ENCODE measurements at regions of chr2 and their contacts with region 1.

Region 1: DNA sequence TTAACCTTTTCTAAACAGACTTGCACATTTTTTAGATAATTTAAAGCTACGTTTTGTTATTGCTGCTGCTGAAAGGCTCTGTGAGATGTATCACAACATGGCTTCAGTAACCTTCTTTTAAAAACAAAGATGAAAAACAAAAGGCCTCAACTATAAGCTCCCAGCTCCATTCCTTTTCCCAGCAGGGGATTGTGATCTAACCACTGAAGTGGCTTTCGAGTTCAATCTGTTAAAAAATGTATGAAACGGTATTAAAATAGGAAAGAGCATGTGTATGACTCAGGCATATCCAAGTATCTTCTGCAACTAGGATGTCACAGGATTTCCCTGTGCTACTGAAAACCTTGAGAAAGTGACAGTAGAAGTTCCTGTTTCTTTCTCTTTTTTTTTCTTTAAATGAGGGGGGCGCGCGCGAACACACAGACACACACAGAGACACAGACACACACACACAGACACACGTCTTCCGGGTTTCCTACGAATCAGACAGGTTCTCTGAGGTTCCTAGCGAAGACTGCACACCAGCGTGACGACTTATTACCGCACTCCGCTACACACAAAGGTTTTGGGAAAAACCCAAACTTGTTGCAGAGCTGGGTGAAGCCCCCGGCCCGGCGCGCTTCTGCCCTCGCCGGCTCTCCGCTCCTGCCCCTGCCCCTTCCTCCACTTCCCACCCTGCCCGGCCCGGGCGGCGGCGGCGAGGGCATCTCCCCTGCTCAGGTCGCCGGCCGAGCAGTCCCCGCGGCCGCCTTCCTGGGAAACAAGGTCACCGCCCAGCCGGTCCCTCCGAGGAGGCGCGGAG is 86.8 kb downstream of the RBMS1 start:
- DNase-seq: peak in 1 of 2 donors; percentile 80
- H3K4me3 ChIP-seq: peak overlapping the region; percentile 92 to 99
- H3K27ac ChIP-seq: peak overlapping the region; percentile 97
- H3K4me1 ChIP-seq: peaks cover 10 to 44% of the 10 kb centered on the region in 2 donors
- H3K27me3 ChIP-seq: no peaks in the 10 kb centered on the region
- CTCF ChIP-seq: peak in 1 of 3 experiments; percentile 3

Region 2: DNA sequence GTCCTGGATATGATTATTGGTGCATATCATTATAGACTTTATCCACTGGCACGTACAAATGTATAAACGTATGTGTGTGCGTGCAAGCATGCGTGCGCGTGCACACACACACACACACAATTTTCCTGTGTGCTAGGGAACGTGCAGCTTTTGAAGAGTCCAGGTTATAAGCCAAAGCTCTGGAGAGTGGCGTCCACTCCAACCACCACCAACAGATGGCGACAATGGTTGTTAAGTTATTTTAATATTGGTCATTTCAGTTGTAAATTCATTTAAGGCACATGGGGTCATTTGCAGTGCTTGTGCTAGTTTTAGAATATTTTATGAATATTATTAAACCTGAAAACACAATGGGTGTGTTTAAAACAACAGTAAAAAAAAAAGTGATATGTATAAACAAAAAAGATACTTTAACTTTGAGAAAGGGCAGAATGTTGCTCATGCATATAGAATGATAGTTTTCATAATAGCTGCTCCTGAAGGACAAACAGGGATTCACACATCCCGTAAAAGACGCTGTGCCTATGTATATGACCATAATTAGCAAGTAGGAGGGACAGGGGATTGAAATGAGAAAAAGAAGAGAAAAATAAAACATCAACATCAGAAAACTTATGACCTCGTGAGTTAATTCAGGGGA is 82.5 kb before region 1 on chr2:
- intact Hi-C with region 1: loop called (anchors 2 kb)
- DNase-seq: peak in 1 of 2 donors; percentile 78
- H3K4me3 ChIP-seq: no peak overlapping the region
- H3K27ac ChIP-seq: no peak overlapping the region
- H3K4me1 ChIP-seq: peaks cover 1 to 23% of the 10 kb centered on the region in 2 donors
- H3K27me3 ChIP-seq: no peaks in the 10 kb centered on the region
- CTCF ChIP-seq: peak; percentile 27 to 81 (median 66)

Region 3: GRCh38 chr2:160387558-160388262 is 19.1 kb before region 1 on chr2:
- intact Hi-C with region 1: loop called (anchors 2 kb)
- DNase-seq: peak; percentile 65 to 93
- H3K4me3 ChIP-seq: peak overlapping the region in 1 of 2 donors; percentile 1
- H3K27ac ChIP-seq: peak overlapping the region; percentile 83 to 93
- H3K4me1 ChIP-seq: peaks cover 13 to 48% of the 10 kb centered on the region in 2 donors
- H3K27me3 ChIP-seq: no peaks in the 10 kb centered on the region
- CTCF ChIP-seq: no peak